B cell (primary cell): ENCODE measurements at regions of chr6 and their contacts with region 1.

Region 1: DNA sequence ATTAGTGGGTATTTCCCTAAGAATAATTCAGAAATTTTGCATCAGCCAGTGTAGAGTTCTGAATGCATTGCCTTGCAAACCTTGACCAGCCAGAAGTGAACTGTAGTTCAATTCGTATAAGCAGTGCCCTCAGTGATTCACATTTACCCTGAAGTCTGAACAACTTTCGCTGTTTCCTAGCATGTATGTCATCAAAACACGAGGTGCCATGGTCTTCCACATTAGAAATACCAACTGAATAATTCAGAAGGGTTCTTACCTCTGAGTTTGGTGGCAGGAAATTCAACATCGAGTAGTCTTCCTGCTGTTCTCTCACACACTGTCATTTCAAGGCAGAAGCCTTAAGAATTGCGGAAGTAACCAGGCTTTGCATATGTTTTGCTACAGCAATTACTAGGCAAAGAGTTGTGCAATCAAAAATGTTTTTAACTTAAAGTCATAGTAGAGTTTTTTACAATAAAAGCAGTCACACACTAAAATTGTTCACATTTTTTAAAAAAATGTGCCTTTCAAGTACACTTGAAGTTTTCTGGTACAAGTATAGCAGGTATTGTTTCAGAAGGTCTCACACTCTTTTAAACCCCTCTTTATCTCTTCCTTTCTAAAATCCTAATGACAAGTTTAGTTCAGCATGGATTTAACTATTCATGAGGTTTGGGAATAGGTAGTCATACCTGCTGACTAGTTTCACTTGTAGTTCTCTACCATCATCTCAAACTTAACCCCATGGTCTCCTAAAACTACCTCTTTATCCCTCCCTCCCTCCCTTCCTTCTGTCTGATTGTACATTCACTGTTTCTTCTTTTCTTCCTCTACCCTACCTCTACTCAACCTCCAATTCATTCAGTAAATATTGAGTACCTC is 118.3 kb downstream of the STXBP5 start:
- DNase-seq: peak; percentile 73
- ATAC-seq: peak; percentile 94
- H3K4me3 ChIP-seq: peak overlapping the region; percentile 35 to 89 (median 58)
- H3K4me3 Mint-ChIP-seq: peak overlapping the region; percentile 92
- H3K27ac ChIP-seq: peak overlapping the region; percentile 58 to 89
- H3K27ac Mint-ChIP-seq: peak overlapping the region; percentile 96
- H3K4me1 ChIP-seq: peaks cover 16% of the 10 kb centered on the region in 2 donors
- H3K4me1 Mint-ChIP-seq: peaks cover 26% of the 10 kb centered on the region
- H3K27me3 ChIP-seq: no peaks in the 10 kb centered on the region
- H3K27me3 Mint-ChIP-seq: no peaks in the 10 kb centered on the region
- CTCF ChIP-seq: no peak

Region 2: GRCh38 chr6:147311218-147311617 is 11.3 kb before region 1 on chr6:
- CTCF ChIA-PET with region 1: no interaction called
- POLR2A ChIA-PET with region 1: no interaction called
- intact Hi-C with region 1: loop called (anchors 1 kb)
- DNase-seq: no peak
- ATAC-seq: no peak
- H3K4me3 ChIP-seq: no peak overlapping the region
- H3K4me3 Mint-ChIP-seq: no peak overlapping the region
- H3K27ac ChIP-seq: no peak overlapping the region
- H3K27ac Mint-ChIP-seq: no peak overlapping the region
- H3K4me1 ChIP-seq: no peaks in the 10 kb centered on the region
- H3K4me1 Mint-ChIP-seq: no peaks in the 10 kb centered on the region
- H3K27me3 ChIP-seq: no peaks in the 10 kb centered on the region
- H3K27me3 Mint-ChIP-seq: no peaks in the 10 kb centered on the region
- CTCF ChIP-seq: no peak

Region 3: DNA sequence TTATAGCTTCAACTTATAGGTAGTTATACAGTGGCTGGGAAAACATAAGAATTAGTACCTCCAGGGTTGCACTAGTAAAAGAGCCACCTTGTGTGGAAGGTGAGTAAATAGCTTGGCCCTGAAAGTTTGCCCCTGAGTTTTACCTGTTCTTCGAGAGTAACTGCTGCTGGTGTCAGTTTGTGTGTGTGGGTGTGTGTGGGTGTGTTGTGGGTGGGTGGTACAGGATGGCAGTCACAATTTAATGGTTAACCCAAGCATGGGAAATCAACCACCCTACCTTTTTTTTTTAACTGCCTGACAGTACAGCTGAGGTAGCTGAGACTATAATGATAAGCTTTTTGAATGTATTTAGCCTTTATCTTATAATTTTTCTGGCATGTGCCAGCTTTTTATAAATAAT is 19.0 kb after region 1 on chr6:
- CTCF ChIA-PET with region 1: no interaction called
- POLR2A ChIA-PET with region 1: no interaction called
- intact Hi-C with region 1: no loop called
- DNase-seq: no peak
- ATAC-seq: no peak
- H3K4me3 ChIP-seq: no peak overlapping the region
- H3K4me3 Mint-ChIP-seq: no peak overlapping the region
- H3K27ac ChIP-seq: no peak overlapping the region
- H3K27ac Mint-ChIP-seq: no peak overlapping the region
- H3K4me1 ChIP-seq: no peaks in the 10 kb centered on the region
- H3K4me1 Mint-ChIP-seq: no peaks in the 10 kb centered on the region
- H3K27me3 ChIP-seq: no peaks in the 10 kb centered on the region
- H3K27me3 Mint-ChIP-seq: no peaks in the 10 kb centered on the region
- CTCF ChIP-seq: no peak